Aorta (tissue), 5 donors: ENCODE measurements at regions of chr12 and their contacts with region 1.

Region 1: DNA sequence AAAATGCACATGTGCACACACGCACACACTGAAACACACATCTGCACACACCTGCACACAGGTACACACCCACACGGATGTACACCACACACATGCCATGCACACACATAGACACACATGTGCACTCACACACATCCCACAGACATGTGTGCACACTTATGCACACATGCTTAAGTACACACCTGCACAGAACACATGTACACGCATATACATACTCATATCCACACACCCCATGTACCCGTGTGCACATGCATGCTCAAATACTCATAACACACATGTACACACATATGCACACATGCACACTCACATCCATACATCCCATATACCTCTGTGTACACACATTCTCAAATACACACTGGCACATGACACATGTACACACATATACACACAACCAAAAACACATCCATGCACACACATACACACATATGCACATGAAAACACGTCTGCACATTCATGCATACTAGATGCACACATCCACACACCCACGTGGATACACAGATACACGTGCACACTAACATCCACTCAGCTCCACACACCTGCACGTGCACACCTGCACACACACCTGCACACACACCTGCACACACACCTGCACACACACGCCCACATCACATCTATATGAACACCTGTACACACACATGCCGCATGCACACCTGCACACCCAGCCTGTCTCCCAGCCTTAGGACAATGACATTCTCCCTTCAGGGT is 336.7 kb downstream of the ADGRD1 start:
- DNase-seq: no peak
- ATAC-seq: no peak
- H3K4me3 ChIP-seq: no peak overlapping the region
- H3K27ac ChIP-seq: no peak overlapping the region
- H3K4me1 ChIP-seq: no peaks in the 10 kb centered on the region
- H3K27me3 ChIP-seq: no peaks in the 10 kb centered on the region

Region 2: DNA sequence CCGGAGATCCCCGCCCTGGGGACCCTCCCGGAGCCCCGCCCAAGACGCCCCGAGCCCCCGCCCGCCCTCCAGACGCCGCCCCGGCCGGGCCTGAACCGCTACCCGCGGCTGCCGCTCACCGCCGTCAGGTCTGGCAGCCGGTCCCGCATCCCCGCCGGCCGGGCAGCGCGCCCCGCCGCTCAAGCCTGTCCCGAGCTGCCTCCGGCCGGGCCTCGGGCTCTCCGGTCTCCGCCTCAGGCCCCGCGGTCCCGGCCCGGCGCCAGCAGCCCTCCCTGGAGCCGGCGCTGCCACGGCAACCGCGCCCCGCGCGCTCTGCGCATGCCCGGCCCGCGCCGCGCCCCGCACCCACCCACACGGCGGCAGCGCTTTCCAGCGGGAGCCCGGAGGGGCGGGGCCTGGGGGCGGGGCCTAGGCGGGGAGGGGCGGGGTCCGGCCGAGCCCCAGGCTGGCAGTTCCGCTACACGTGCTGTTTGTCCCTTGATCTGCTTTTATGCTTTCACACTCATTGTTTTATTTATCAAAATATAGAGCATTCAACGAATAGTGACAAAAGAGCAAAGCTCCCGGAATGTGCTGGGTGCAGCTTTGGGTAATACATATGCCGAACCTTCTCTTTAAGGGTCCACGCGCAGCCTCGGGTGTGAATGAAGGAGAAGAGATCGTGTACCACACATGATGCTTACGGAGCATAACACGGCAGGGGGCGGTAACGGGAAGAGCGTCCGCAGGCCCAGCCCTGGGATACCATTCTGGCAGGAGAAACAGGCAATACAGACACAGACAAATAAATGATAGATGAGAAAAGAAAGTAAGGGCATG is 451.2 kb before region 1 on chr12 and contains the start of gene STX2:
- intact Hi-C with region 1: no loop called
- DNase-seq: peak; percentile 90 to 97
- ATAC-seq: peak; percentile 97
- H3K4me3 ChIP-seq: peak within 1 kb of the TSS; percentile 95 to 99
- H3K27ac ChIP-seq: no peak within 1 kb of the TSS
- H3K4me1 ChIP-seq: no peaks in the 10 kb centered on the region
- H3K27me3 ChIP-seq: no peaks in the 10 kb centered on the region
- total RNA-seq, gene STX2: 30.4 to 31.5 TPM

Region 3: GRCh38 chr12:131351319-131352028 is 61.1 kb after region 1 on chr12:
- intact Hi-C with region 1: no loop called
- DNase-seq: no peak
- ATAC-seq: no peak
- H3K4me3 ChIP-seq: no peak overlapping the region
- H3K27ac ChIP-seq: no peak overlapping the region
- H3K4me1 ChIP-seq: no peaks in the 10 kb centered on the region
- H3K27me3 ChIP-seq: no peaks in the 10 kb centered on the region

Region 4: DNA sequence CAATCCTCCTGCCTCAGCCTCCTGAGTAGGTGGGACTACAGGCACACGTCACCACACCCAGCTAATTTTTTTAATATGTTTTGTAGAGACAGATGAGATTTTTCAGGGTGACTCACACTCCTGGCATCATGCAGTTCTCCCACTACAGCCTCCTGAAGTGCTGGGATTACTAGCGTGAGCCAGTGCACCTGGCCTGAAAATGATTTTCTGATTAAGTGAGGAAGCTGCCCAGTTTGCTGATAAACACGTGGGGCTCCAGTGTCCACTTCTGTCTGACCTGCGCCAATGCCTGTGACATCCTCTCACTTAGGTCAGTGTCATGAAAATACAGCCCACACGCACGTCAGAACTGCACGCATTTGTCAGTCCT is 383.5 kb after region 1 on chr12:
- intact Hi-C with region 1: loop called in 1 of 2 experiments (anchors 10 kb)
- DNase-seq: peak; percentile 8 to 15
- ATAC-seq: no peak
- H3K4me3 ChIP-seq: no peak overlapping the region
- H3K27ac ChIP-seq: no peak overlapping the region
- H3K4me1 ChIP-seq: no peaks in the 10 kb centered on the region
- H3K27me3 ChIP-seq: no peaks in the 10 kb centered on the region